Esophagus squamous epithelium (tissue), 5 donors: ENCODE measurements at regions of chr10 and their contacts with region 1.

Region 1: DNA sequence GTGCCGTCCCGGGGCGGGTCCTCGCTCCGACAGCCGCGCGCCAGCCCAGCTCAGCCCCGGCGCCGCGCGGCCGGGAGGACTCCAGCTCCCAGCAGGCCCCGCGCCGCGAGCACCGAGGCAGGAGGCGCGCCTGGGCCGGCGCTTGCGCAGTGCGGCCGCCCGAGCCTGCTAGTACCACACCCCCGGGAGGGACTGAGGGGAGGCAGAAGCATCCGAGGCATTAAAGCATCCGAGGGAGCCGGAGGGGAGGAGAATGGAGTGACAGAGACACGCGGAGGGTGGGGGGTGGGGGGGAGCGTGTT is at the start of gene GRK5:
- DNase-seq: peak; percentile 79
- H3K4me3 ChIP-seq: peak within 1 kb of the TSS; percentile 64 to 95 (median 92)
- H3K27ac ChIP-seq: peak within 1 kb of the TSS; percentile 88 to 99 (median 98)
- H3K4me1 ChIP-seq: peaks cover 13 to 58% (median 22%) of the 10 kb centered on the region in 3 donors
- H3K27me3 ChIP-seq: no peaks in the 10 kb centered on the region
- CTCF ChIP-seq: no peak
- POLR2A ChIP-seq: peak in 3 of 4 donors; percentile 37 to 79 (median 41)
- total RNA-seq, gene GRK5: 2.4 to 18.9 (median 6.3) TPM

Region 2: DNA sequence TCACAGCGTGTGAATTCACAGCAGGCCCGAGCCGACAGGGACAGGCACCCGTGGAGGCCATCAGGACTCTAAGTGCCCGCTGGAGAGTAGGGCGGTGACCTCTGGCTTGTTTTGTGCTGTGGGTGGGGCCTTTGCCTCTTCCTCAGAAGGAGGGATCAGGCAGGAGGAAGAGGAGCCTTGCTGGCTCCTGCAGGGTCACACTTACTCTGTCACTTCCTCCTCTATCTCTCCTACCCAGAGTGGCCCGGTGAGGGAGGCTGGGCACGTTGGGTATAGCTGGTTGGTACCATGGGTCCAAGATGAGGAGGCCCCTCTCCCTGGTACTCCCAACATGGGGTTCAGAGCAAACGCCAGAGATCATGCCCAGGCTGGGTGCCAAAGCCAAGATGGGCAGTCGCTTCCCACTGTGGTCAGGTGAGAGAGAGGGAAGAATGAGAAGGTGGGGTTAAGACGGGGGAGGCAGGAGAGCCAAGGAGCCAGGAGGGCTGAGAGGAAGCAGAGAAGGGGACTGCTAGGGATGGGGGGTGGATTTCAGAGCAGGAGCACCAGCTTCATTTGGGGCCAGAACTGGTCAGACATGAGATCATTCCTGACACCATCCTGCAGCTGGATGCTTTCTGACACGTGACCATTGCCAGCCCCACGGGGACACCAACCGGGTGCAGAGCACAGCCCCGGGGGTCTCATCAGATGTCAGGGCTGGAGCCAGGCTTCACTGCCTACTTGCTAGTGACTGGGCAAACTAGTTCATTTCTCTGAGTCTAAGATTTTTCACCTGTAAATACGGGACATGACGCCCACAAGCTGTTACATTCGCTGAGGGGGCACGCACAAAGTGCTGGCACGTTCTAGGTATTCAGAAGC is 397.7 kb before region 1 on chr10:
- intact Hi-C with region 1: no loop called
- DNase-seq: no peak
- H3K4me3 ChIP-seq: no peak overlapping the region
- H3K27ac ChIP-seq: no peak overlapping the region
- H3K4me1 ChIP-seq: no peaks in the 10 kb centered on the region
- H3K27me3 ChIP-seq: peaks cover 0 to 6% (median 0%) of the 10 kb centered on the region in 4 donors
- CTCF ChIP-seq: no peak
- POLR2A ChIP-seq: no peak

Region 3: GRCh38 chr10:119305860-119306513 is 98.7 kb after region 1 on chr10:
- intact Hi-C with region 1: loop called (anchors 10 kb)
- DNase-seq: peak; percentile 19
- H3K4me3 ChIP-seq: peak overlapping the region in 1 of 4 donors; percentile 44
- H3K27ac ChIP-seq: peak overlapping the region; percentile 58 to 92 (median 74)
- H3K4me1 ChIP-seq: peaks cover 14 to 94% (median 70%) of the 10 kb centered on the region in 3 donors
- H3K27me3 ChIP-seq: no peaks in the 10 kb centered on the region
- CTCF ChIP-seq: no peak
- POLR2A ChIP-seq: peak in 1 of 4 donors; percentile 14

Region 4: GRCh38 chr10:119416855-119417254 is 209.5 kb after region 1 on chr10:
- intact Hi-C with region 1: loop called (anchors 5 kb)
- DNase-seq: no peak
- H3K4me3 ChIP-seq: no peak overlapping the region
- H3K27ac ChIP-seq: peak overlapping the region in 1 of 4 donors; percentile 31
- H3K4me1 ChIP-seq: peaks cover 8 to 47% (median 31%) of the 10 kb centered on the region in 3 donors
- H3K27me3 ChIP-seq: no peaks in the 10 kb centered on the region
- CTCF ChIP-seq: peak; percentile 39 to 88 (median 78)
- POLR2A ChIP-seq: no peak

Region 5: DNA sequence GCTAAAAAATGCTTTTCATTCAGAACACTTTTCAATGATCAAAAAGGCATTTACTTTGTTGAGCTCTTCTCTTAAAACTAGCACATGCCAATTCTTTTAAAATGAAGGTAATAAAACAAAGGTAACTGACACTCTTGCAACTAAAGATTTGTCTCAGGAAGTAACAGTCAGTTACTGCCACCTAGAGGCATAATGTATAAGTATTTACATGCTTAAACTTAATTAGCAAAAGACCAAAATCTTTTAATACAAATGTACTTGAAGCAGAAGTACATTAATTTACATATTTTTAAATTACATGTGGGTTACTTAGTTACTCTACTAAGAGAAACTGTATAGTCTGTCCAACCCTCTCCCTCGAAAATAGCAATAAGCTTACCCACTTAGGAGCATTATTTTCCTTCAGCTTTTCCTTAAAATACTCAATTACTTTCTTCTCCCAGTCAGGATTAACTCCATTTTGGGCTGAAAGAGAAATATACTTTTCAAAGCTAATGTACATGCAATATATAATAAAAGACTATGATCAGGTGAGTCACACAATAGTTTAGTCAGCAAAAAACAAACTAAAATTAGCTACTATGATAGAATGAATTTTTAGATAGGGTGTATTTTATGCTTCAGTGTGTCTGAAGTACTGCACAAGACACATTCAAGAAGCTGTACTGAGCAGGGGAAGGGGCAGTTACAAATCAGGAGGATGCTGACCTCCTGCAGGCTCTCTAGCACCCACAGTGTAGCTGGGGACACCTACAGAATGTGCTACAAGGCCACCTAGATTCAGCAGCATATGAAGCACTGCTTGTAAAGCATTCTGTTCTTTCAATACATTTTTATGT is 652.3 kb after region 1 on chr10:
- intact Hi-C with region 1: no loop called
- DNase-seq: no peak
- H3K4me3 ChIP-seq: no peak overlapping the region
- H3K27ac ChIP-seq: no peak overlapping the region
- H3K4me1 ChIP-seq: peaks cover 0 to 21% (median 3%) of the 10 kb centered on the region in 3 donors
- H3K27me3 ChIP-seq: no peaks in the 10 kb centered on the region
- CTCF ChIP-seq: peak; percentile 43 to 69 (median 54)
- POLR2A ChIP-seq: no peak